WTC11 (cell line): ENCODE measurements at regions of chr2 and their contacts with region 1.

Region 1: GRCh38 chr2:120283649-120284048 is 31.0 kb downstream of the RALB start:
- DNase-seq: no peak
- ATAC-seq: peak; percentile 93
- H3K4me3 Mint-ChIP-seq: peak overlapping the region; percentile 2; the same call in 1 of the 2 replicates
- H3K27ac Mint-ChIP-seq: peak overlapping the region; percentile 4; the same call in 1 of the 2 replicates
- H3K4me1 Mint-ChIP-seq: peaks cover 35% of the 10 kb centered on the region
- H3K27me3 Mint-ChIP-seq: no peaks in the 10 kb centered on the region
- CTCF ChIP-seq: no peak

Region 2: GRCh38 chr2:120150040-120150482 is 133.6 kb before region 1 on chr2:
- CTCF ChIA-PET with region 1: no interaction called
- POLR2A ChIA-PET with region 1: no interaction called
- DNase-seq: no peak
- ATAC-seq: no peak
- H3K4me3 Mint-ChIP-seq: no peak overlapping the region
- H3K27ac Mint-ChIP-seq: no peak overlapping the region
- H3K4me1 Mint-ChIP-seq: no peaks in the 10 kb centered on the region
- H3K27me3 Mint-ChIP-seq: no peaks in the 10 kb centered on the region
- CTCF ChIP-seq: no peak

Region 3: DNA sequence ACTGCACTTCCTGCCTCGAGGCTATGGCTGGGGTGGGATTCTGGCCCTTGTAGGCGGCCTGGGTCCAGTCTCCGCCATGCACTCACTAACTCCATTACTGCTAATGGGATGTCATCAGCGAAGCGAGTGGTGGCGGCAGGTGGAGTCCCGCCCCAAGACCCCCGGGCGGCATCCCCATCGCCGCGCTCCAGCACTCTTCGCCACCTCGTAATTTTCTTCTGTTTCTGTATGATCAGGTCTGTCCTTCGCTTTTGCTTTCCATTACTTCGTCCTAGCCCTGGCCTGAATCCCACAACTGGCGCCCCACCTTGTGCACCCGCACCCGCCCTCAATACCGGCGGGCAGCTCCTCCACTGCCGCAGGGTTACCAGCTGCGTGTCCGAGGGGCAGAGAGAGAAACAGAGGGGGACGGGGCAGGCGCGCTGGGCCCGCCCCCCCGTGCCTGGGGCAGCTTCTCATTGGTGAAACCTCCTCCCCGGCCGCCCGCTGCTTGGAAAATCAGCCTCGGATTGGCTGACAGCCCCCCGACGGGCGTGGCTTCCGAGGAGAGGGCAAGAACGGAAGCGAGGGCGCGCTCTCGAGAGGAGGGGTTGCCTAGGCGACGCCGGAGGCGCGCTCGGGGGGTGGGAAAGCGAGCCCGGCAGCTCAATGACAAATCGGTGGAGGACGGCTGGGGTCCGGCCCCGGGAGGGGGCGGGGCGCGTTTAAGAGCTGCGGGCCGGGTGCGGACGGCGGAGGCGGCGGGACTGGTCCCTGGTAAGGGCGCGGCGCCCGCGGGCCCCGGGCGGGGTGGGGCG is 31.2 kb before region 1 on chr2 and contains the start of gene RALB:
- CTCF ChIA-PET with region 1: interaction called, 12 read pairs
- POLR2A ChIA-PET with region 1: interaction called, 5 read pairs
- DNase-seq: peak; percentile 100
- ATAC-seq: peak; percentile 92
- H3K4me3 Mint-ChIP-seq: peak within 1 kb of the TSS; percentile 99
- H3K27ac Mint-ChIP-seq: no peak within 1 kb of the TSS
- H3K4me1 Mint-ChIP-seq: peaks cover 43% of the 10 kb centered on the region
- H3K27me3 Mint-ChIP-seq: peaks cover 65% of the 10 kb centered on the region
- CTCF ChIP-seq: no peak
- total RNA-seq, gene RALB: 17.1 to 18.0 TPM (median 17.9 TPM) in 3 replicates

Region 4: GRCh38 chr2:120294008-120294340 is 10.3 kb after region 1 on chr2:
- CTCF ChIA-PET with region 1: interaction called, 20 read pairs
- POLR2A ChIA-PET with region 1: no interaction called
- DNase-seq: no peak
- ATAC-seq: no peak
- H3K4me3 Mint-ChIP-seq: no peak overlapping the region
- H3K27ac Mint-ChIP-seq: no peak overlapping the region
- H3K4me1 Mint-ChIP-seq: peaks cover 46% of the 10 kb centered on the region
- H3K27me3 Mint-ChIP-seq: no peaks in the 10 kb centered on the region
- CTCF ChIP-seq: no peak